ENCODE measurements at regions of chr7 and their contacts with region 1.

Region 1: GRCh38 chr7:142478479-142479072 is 220.7 kb upstream of the PRSS58 start:
- DNase-seq: no peak
- H3K4me3 ChIP-seq: no peak overlapping the region
- CTCF ChIP-seq: peak; percentile 66

Region 2: GRCh38 chr7:142357953-142358520 is 120.5 kb before region 1 on chr7:
- CTCF ChIA-PET with region 1: interaction called, 238 read pairs
- POLR2A ChIA-PET with region 1: no interaction called
- DNase-seq: peak; percentile 36
- H3K4me3 ChIP-seq: no peak overlapping the region
- CTCF ChIP-seq: peak; percentile 80

Region 3: DNA sequence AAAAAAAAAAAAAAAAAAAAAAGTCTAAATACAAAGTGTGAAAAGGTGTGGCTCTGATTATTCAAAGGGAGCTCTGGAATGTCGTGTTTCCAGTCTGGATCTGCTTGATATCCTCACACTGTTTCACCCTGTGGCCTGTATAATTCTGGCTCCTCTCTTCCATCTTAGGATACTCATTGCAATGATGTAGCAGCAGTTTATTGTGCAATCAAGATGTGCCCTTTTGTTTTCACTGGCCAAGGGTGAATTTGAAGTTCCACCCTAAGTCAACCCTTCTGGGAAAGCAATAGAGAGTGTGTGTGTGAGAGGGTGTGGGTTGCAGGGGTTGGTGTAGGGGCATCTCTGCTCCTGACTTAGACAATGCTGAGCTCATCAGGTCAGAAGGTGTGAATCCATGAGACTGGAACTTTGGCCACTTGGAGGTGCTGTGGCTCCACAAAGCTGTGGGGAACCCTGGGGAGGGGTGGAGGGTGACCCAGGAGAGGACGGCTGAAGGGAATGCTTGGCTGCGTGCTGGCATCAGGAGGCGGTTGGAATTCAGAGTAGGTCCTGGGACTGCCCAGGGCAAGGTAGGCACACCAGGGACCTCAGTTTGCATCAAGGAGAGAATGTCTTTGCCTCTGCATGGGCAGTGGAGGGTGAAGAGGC is 102.8 kb before region 1 on chr7:
- CTCF ChIA-PET with region 1: interaction called, 18 read pairs
- POLR2A ChIA-PET with region 1: no interaction called
- DNase-seq: no peak
- H3K4me3 ChIP-seq: no peak overlapping the region
- CTCF ChIP-seq: peak; percentile 48

Region 4: GRCh38 chr7:142391191-142391992 is 87.2 kb before region 1 on chr7:
- CTCF ChIA-PET with region 1: interaction called, 101 read pairs
- POLR2A ChIA-PET with region 1: no interaction called
- DNase-seq: no peak
- H3K4me3 ChIP-seq: no peak overlapping the region
- CTCF ChIP-seq: peak; percentile 49

Region 5: GRCh38 chr7:142405122-142405765 is 73.3 kb before region 1 on chr7:
- CTCF ChIA-PET with region 1: interaction called, 11 read pairs
- POLR2A ChIA-PET with region 1: no interaction called
- DNase-seq: peak; percentile 50
- H3K4me3 ChIP-seq: no peak overlapping the region
- CTCF ChIP-seq: peak; percentile 8

Region 6: DNA sequence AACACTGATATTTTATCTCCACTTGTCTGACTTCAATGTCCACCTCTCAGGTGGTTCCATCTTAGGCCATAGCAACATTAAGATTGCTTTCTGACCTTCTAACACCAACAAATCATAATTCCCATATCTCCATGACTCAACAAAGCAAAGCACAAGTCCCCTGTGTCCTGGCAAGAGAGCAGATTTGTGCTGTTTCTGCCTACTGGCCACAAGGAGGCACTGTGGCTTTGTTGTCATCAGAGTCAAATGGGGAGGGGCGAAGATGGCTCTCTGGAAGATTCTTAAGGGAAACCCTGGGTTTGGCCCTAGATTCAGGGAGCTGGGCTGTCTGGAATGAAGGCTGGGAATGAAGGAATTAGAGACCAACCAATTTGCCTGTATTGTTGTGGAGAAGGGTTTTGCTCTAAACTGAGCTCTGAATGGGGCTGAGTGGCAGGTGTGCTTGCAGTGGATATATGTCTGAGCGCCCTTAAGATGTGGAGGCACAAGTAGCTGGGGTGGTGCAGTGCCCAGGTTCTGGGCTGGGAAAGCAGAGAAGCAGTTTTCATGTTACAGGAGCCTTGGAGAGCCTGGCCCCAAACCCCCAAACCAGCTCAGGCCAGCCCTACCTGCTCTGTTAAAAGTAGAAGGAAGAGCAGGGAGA is 65.9 kb before region 1 on chr7:
- CTCF ChIA-PET with region 1: interaction called, 324 read pairs
- POLR2A ChIA-PET with region 1: no interaction called
- DNase-seq: peak; percentile 16
- H3K4me3 ChIP-seq: no peak overlapping the region
- CTCF ChIP-seq: peak; percentile 84

Region 7: DNA sequence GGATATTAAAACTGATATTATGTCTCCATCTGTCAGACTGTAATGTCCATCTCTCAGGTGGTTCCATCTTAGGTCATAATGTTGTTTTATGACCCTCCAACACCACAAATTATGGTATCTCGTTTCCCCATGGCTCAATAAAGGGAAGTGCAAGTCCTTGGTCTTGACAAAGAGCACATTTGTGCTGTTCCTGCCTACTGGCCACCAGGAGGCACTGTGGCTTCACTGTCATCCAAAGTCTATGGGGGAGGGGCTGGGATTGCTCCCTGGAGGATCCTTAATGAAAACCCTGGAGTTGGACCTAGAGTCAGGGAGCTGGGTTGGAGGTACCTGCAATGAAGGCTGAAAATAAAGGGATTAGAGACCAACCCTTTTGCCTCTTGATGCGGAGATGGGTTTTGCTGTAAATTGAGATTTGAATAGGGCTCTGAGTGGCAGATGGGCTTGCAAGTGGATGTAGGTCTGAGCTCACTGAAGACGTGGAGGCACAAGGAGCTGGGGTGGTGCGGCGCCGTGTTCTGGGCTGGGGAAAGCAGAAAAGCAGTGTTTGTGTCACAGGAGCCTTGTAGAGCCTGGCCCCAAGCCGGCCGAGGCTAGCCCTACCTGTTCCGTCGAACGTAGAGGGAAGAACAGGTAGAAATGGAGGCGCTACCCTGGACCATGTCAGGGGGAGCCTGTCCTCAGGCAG is 40.2 kb before region 1 on chr7:
- CTCF ChIA-PET with region 1: interaction called, 165 read pairs
- POLR2A ChIA-PET with region 1: no interaction called
- DNase-seq: no peak
- H3K4me3 ChIP-seq: no peak overlapping the region
- CTCF ChIP-seq: peak; percentile 62

Measured in AG04449 (cell line).